PC-9 (cell line): ENCODE measurements at regions of chr11 and their contacts with region 1.

Region 1: DNA sequence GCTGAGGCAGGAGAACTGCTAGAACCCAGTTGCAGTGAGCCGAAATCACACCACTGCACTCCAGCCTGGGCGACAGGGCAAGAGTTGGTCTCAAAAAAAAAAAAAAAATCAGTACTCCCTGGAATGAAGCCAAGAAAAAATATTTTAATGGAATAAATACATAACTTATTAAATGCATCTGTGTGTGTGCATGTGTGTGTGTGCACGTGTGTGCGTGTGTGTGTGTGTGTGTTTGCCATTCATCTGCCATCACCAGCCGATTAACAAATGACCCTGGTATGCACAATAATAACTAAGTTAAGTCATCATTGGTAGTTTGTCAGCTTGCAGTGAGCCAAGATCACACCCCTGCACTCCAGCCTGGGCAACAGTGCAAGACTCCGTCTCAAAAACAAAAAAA is 35.0 kb upstream of the SCGB1A1 start:
- DNase-seq: no peak
- H3K4me3 ChIP-seq: no peak overlapping the region
- H3K27ac ChIP-seq: no peak overlapping the region
- H3K4me1 ChIP-seq: no peaks in the 10 kb centered on the region; the same call in none of the 2 replicates
- H3K27me3 ChIP-seq: no peaks in the 10 kb centered on the region
- CTCF ChIP-seq: no peak

Region 2: DNA sequence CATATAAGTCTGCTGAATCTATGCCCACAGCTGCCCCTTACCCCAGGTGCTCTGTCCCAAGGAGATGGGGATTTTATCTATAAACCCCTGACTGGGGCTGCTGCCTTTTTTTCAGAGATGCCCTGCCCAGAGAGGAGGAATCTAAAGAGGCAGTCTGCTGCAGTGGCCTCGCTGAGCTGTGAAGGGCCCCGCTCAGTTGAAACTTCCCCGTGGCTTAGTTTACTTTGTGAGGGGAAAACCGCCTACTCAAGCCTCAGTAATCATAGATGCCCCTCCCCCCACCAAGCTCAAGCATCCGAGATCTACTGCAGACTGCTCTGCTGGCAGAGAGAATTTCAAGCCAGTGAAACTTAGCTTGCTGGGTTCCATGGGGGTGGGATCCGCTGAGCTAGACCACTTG is 77.6 kb before region 1 on chr11:
- CTCF ChIA-PET with region 1: no interaction called
- POLR2A ChIA-PET with region 1: no interaction called
- intact Hi-C with region 1: no loop called
- DNase-seq: no peak
- H3K4me3 ChIP-seq: no peak overlapping the region
- H3K27ac ChIP-seq: no peak overlapping the region
- H3K4me1 ChIP-seq: no peaks in the 10 kb centered on the region
- H3K27me3 ChIP-seq: peaks cover 72% of the 10 kb centered on the region
- CTCF ChIP-seq: no peak

Region 3: DNA sequence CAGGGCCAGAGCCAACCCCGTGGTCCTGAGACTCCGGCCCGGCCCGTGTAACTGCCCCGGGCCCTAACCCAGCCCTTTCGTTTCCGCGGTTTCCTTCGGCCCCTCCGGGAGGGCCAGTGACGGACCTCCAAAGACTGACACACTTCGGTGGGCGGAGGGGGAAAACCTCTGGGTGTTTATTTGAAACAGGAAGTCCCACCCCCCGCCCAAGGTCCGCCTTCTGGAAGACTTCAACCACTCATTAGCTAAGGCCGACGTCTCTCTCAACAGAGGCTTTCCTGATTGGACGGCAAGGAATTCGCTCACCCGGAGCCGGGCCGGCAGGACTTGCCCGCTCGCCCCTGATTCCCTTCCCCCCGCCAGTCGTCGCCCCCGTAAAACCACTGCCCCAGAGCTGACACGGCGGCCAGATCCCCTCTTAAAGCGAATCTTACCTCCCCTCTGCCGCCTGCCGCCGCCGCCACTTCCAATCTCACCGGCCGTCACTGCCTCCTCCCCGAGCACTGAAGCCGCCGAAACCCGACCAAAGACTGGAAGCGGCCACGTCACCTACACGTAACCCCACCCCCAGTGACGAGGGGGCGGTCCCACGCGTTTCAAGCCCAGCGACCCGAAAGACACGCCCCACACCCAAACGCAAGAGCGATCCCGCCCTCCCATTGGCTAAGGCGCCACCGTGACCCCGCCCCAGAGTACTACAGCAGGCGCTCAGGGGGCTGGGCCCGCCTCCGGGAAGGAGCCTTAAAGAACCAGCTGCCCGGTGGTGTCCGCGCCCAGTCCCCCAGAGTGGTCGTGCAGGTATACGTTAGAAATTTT is 447.9 kb after region 1 on chr11 and contains the start of gene STX5:
- CTCF ChIA-PET with region 1: no interaction called
- POLR2A ChIA-PET with region 1: no interaction called
- intact Hi-C with region 1: loop called (anchors 2 kb)
- DNase-seq: peak; percentile 96 to 99
- H3K4me3 ChIP-seq: peak within 1 kb of the TSS; percentile 100
- H3K27ac ChIP-seq: peak within 1 kb of the TSS; percentile 77
- H3K4me1 ChIP-seq: peaks cover 22% of the 10 kb centered on the region
- H3K27me3 ChIP-seq: no peaks in the 10 kb centered on the region
- CTCF ChIP-seq: no peak
- total RNA-seq, gene STX5: 61.9 and 65.8 TPM in 2 replicates

Region 4: GRCh38 chr11:63023841-63024648 is 640.2 kb after region 1 on chr11:
- CTCF ChIA-PET with region 1: no interaction called
- POLR2A ChIA-PET with region 1: no interaction called
- intact Hi-C with region 1: loop called (anchors 1 kb)
- DNase-seq: peak; percentile 50 to 81
- H3K4me3 ChIP-seq: no peak overlapping the region
- H3K27ac ChIP-seq: no peak overlapping the region
- H3K4me1 ChIP-seq: no peaks in the 10 kb centered on the region
- H3K27me3 ChIP-seq: peaks cover 69% of the 10 kb centered on the region
- CTCF ChIP-seq: peak; percentile 100